Heart right ventricle (tissue), 16 donors: ENCODE measurements at regions of chr5 and their contacts with region 1.

Region 1: GRCh38 chr5:36690041-36690961 is 83.9 kb downstream of the SLC1A3 start:
- DNase-seq: peak; percentile 64 to 80
- ATAC-seq: peak; percentile 66 to 85 (median 72)
- H3K4me3 ChIP-seq: peak overlapping the region; percentile 19 to 66 (median 61)
- H3K27ac ChIP-seq: peak overlapping the region; percentile 26 to 85 (median 72)
- H3K4me1 ChIP-seq: peaks cover 8 to 52% (median 28%) of the 10 kb centered on the region in 9 donors
- H3K27me3 ChIP-seq: peaks cover 0 to 6% (median 0%) of the 10 kb centered on the region in 7 donors
- CTCF ChIP-seq: peak; percentile 45 to 87 (median 80)

Region 2: DNA sequence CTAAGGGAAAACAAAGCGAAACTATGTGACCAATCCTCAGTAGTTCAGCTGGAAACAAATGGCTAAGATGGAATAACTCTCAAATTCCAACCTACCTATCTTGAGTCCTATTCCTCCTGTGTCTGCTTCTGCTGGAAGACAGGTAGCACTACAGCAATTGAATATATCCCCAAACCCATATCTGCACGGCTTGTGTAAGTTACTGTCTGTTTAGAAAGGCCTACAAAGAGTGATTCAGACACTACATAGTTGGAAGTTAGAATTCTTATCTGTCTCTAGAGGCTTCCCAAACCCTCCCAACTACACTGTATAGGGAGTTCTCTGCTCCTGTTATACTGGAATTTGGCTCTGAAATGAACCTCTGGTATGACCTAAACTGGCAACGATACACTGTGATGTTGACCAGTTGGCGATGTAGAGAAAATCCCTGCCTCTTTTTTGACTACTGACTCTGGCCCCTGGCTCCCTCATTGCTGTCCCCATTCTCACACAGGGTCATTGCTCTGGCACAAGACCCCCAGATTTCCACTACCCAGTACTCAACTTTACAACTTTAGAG is 426.0 kb before region 1 on chr5:
- intact Hi-C with region 1: loop called in 5 of 10 experiments (anchors 5 to 10 kb)
- DNase-seq: no peak
- ATAC-seq: no peak
- H3K4me3 ChIP-seq: no peak overlapping the region
- H3K27ac ChIP-seq: no peak overlapping the region
- H3K4me1 ChIP-seq: no peaks in the 10 kb centered on the region
- H3K27me3 ChIP-seq: no peaks in the 10 kb centered on the region
- CTCF ChIP-seq: no peak

Region 3: GRCh38 chr5:36507332-36507952 is 182.9 kb before region 1 on chr5:
- intact Hi-C with region 1: loop called in 5 of 10 experiments (anchors 2 to 10 kb)
- DNase-seq: peak; percentile 72 to 73
- ATAC-seq: peak in 5 of 8 donors; percentile 55 to 70 (median 65)
- H3K4me3 ChIP-seq: no peak overlapping the region
- H3K27ac ChIP-seq: no peak overlapping the region
- H3K4me1 ChIP-seq: no peaks in the 10 kb centered on the region
- H3K27me3 ChIP-seq: no peaks in the 10 kb centered on the region
- CTCF ChIP-seq: peak; percentile 57 to 91 (median 80)

Region 4: GRCh38 chr5:36606428-36607113 is 83.7 kb before region 1 on chr5 and contains the start of gene SLC1A3:
- intact Hi-C with region 1: loop called in 7 of 10 experiments (anchors 2 to 5 kb)
- DNase-seq: peak; percentile 29 to 41
- ATAC-seq: peak; percentile 73 to 92 (median 87)
- H3K4me3 ChIP-seq: peak within 1 kb of the TSS; percentile 32 to 67 (median 60)
- H3K27ac ChIP-seq: peak within 1 kb of the TSS; percentile 75 to 90 (median 86)
- H3K4me1 ChIP-seq: peaks cover 0 to 55% (median 9%) of the 10 kb centered on the region in 9 donors
- H3K27me3 ChIP-seq: peaks cover 0 to 14% (median 0%) of the 10 kb centered on the region in 7 donors
- CTCF ChIP-seq: no peak
- total RNA-seq, gene SLC1A3: 39.5 to 83.6 (median 58.5) TPM

Region 5: DNA sequence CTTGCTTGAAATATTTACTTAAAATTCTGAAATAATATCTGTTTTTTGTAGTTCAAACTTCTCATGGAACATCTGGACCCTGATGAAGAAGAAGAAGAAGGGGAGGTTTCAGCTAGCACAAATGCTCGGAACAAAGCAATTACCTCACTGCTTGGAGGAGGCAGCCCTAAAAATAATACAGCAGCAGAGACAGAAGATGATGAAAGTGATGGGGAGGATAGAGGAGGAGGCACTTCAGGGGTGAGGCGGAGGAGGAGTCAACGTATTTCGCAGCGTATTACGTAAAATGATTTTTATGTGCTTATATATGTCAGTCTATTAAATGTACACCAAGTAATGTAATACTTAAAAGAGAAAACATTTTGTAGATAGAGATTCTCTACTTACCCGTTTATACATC is 373.4 kb after region 1 on chr5:
- intact Hi-C with region 1: no loop called
- DNase-seq: no peak
- ATAC-seq: no peak
- H3K4me3 ChIP-seq: no peak overlapping the region
- H3K27ac ChIP-seq: no peak overlapping the region
- H3K4me1 ChIP-seq: no peaks in the 10 kb centered on the region
- H3K27me3 ChIP-seq: no peaks in the 10 kb centered on the region
- CTCF ChIP-seq: no peak